WTC11 (cell line): ENCODE measurements at regions of chr11 and their contacts with region 1.

Region 1: GRCh38 chr11:4727171-4727570 is 22.6 kb downstream of the MMP26 start:
- DNase-seq: no peak
- ATAC-seq: no peak
- H3K4me3 Mint-ChIP-seq: no peak overlapping the region
- H3K27ac Mint-ChIP-seq: no peak overlapping the region
- H3K4me1 Mint-ChIP-seq: peaks cover 6% of the 10 kb centered on the region
- H3K27me3 Mint-ChIP-seq: no peaks in the 10 kb centered on the region; the same call in 1 of the 2 replicates
- CTCF ChIP-seq: no peak

Region 2: DNA sequence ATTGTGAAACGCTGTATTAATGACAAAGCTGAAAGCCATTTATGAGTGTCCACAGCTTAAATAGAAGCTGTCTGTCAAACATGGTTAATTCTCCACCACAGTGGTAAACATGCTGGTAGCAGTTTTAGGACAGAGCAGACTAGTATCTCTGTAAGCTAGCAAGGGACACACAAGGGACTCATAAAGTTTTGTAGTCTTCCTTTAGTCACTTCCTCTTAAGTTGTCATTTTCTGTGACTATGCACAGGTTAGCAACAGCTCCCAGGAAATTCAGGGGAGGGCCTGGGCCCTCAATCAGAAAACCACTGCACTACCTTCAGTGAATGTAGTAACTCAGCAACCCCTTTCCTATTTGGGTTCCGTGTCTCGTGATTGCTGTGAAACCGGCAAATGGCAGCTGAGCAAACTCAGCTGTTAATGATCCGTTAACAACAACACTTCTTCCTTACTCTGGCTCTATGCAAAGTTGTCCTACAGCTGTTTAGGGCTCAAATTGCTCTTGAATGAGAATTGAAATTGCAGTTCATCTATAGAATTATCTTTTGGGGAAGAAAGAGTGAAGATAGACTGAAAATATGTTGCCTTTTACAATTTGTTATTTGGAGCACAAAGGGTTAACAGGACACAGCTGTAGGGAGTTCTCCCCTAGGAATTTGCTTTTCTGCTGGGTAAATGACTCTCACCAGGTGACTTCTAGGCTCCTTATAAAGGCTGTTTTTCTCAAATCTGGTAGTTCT is 22.9 kb before region 1 on chr11 and contains the start of gene MMP26:
- CTCF ChIA-PET with region 1: interaction called, 16 read pairs
- POLR2A ChIA-PET with region 1: no interaction called
- DNase-seq: peak; percentile 14
- ATAC-seq: peak; percentile 88
- H3K4me3 Mint-ChIP-seq: peak within 1 kb of the TSS; percentile 57
- H3K27ac Mint-ChIP-seq: peak within 1 kb of the TSS; percentile 95
- H3K4me1 Mint-ChIP-seq: peaks cover 29% of the 10 kb centered on the region
- H3K27me3 Mint-ChIP-seq: no peaks in the 10 kb centered on the region
- CTCF ChIP-seq: no peak
- total RNA-seq, gene MMP26: not detected in 3 replicates

Region 3: DNA sequence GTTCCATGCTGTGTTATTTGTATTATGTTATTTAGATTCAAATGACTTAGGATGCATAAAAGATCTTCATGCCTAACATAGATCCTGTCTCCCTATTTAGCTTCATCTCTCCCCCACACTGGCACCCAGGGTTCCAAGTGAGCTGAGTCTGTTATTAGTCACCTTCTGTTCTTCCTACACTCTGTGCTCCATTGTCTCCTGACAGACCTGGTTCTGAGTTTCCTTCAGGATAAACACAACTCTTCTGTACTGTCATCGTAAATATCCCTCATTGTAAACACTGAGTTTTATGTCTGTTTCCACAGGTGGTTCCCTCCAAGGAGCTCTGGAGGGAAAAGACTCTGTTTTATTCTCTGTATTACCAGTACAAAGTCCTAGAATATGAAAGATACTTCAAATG is 13.9 kb before region 1 on chr11:
- CTCF ChIA-PET with region 1: interaction called, 27 read pairs
- POLR2A ChIA-PET with region 1: no interaction called
- DNase-seq: no peak
- ATAC-seq: no peak
- H3K4me3 Mint-ChIP-seq: no peak overlapping the region
- H3K27ac Mint-ChIP-seq: no peak overlapping the region
- H3K4me1 Mint-ChIP-seq: peaks cover 19% of the 10 kb centered on the region
- H3K27me3 Mint-ChIP-seq: no peaks in the 10 kb centered on the region
- CTCF ChIP-seq: no peak

Region 4: GRCh38 chr11:4740735-4741134 is 13.6 kb after region 1 on chr11:
- CTCF ChIA-PET with region 1: interaction called, 12 read pairs
- POLR2A ChIA-PET with region 1: no interaction called
- DNase-seq: no peak
- ATAC-seq: no peak
- H3K4me3 Mint-ChIP-seq: no peak overlapping the region
- H3K27ac Mint-ChIP-seq: no peak overlapping the region
- H3K4me1 Mint-ChIP-seq: no peaks in the 10 kb centered on the region
- H3K27me3 Mint-ChIP-seq: no peaks in the 10 kb centered on the region
- CTCF ChIP-seq: no peak